ENCODE measurements at regions of chr11 and their contacts with region 1.

Region 1: GRCh38 chr11:10588904-10589303 is 20.4 kb upstream of the LYVE1 start:
- DNase-seq: no peak
- ATAC-seq: no peak
- H3K4me3 ChIP-seq: no peak overlapping the region
- H3K27ac ChIP-seq: no peak overlapping the region
- H3K4me1 ChIP-seq: peaks cover 0 to 38% (median 15%) of the 10 kb centered on the region in 12 donors
- H3K27me3 ChIP-seq: no peaks in the 10 kb centered on the region
- CTCF ChIP-seq: no peak
- POLR2A ChIP-seq: no peak

Region 2: DNA sequence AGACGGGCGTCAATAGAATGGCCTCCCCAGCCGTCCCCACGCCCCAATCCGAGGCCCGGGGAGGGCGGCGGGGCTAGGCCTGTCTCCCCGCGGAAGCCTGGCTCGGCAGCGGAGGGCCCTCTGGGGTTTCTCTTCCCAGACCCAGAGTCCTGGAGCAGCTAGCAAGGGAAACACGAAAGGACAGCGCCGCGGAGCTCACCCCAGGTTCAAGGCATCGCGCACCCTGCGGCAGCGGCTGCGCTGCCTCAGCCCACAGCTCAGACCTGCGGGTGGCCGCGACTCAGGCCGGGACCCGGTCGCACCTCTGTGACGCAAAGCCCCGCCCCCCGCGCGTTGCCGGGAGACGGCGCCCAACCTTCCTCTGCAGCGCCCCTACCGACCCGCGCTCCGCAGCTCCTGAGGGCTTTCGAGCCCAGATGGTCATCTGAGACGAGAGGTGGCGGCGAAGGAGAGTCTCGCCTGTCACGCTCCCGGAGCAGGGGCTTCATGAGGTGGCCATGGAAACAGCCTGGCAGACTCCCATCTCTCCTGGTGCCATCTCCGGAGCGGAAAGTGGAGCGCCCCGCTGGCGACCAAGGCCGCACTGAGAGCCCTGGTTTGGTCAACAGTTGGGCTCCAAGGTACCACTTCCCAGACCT is 47.9 kb before region 1 on chr11 and contains the start of gene RNF141:
- intact Hi-C with region 1: loop called in 1 of 10 experiments (anchors 5 kb)
- DNase-seq: peak; percentile 95 to 98 (median 96)
- ATAC-seq: peak; percentile 98 to 100 (median 100)
- H3K4me3 ChIP-seq: peak within 1 kb of the TSS; percentile 69 to 94 (median 80)
- H3K27ac ChIP-seq: peak within 1 kb of the TSS; percentile 35 to 94 (median 87)
- H3K4me1 ChIP-seq: peaks cover 0 to 28% (median 7%) of the 10 kb centered on the region in 12 donors
- H3K27me3 ChIP-seq: no peaks in the 10 kb centered on the region
- CTCF ChIP-seq: peak; percentile 70 to 94 (median 86)
- POLR2A ChIP-seq: peak in 1 of 2 donors; percentile 88
- total RNA-seq, gene RNF141: 18.8 to 42.8 (median 36.5) TPM

Measured in heart left ventricle (tissue), 16 donors.